ENCODE measurements at regions of chr4 and their contacts with region 1.

Region 1: DNA sequence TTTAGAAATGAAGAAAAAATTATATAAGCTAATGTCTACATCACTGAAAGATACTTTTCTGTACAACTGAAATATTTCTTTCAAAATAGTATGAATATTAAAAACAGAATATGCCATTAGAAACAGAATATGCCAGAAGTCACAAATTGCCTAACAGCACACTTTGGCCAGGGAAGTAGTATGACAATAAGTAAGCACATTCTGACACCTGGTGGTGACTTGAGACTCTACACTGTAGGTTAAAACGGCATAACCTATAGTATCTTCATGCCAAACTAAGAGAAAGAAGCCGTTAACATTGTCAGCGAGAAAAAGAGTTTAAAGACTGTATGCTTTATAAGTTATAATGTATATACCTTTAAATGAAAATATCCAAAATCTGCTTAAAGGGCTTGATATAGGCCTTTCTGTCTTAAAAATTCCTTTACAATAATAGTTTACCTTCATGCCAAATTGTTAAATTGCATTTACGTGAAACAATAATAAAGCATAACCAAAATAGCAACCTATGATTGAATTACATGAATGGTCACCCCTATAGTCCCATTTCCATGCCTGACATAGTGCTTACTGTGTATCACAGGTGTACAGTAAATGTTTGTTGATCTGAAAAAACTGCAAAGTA is 32.8 kb downstream of the FAM13A start:
- DNase-seq: no peak
- ATAC-seq: peak; percentile 97

Region 2: DNA sequence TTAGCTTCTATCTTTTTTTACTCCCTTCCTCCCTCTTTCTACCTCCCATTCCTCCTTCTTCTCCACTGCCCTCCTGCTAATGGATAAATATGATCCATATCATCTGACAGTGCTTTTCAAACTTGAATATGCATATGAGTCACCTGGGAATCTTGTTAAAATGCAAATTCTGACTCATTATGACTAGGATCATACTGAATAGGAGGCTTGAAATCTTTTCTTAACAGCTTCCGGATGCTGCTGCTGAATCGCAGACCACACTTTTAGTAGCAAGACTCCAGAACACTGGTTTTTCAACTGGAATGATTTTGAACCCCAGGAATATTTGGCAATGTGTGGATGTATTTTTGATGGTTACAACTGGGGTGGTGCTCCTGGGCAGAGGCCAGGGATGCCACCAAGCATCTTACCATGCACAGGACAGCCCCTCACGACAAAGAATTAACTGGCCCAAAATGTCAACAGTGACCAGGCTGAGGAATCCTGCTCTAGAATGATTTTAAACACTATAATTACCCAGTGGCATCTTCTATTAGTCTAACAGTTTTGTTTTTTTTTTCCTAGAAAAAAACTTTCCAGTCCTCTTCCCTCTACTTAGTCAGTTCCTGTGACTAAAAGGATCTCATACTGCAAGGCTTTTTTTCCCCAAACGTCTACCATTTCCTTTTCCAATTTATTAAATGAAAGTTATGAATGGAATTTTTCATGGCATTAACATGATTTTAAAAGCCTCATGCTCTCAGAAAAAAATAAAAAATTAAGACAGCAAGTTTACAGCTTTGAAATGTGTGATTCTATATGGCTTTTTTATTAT is 490.0 kb before region 1 on chr4:
- intact Hi-C with region 1: loop called (anchors 10 kb)
- DNase-seq: no peak
- ATAC-seq: no peak

Region 3: GRCh38 chr4:88706574-88706973 is 317.6 kb before region 1 on chr4:
- intact Hi-C with region 1: loop called (anchors 5 kb)
- DNase-seq: no peak
- ATAC-seq: peak; percentile 87